ENCODE measurements at regions of chr12 and their contacts with region 1.

Region 1: DNA sequence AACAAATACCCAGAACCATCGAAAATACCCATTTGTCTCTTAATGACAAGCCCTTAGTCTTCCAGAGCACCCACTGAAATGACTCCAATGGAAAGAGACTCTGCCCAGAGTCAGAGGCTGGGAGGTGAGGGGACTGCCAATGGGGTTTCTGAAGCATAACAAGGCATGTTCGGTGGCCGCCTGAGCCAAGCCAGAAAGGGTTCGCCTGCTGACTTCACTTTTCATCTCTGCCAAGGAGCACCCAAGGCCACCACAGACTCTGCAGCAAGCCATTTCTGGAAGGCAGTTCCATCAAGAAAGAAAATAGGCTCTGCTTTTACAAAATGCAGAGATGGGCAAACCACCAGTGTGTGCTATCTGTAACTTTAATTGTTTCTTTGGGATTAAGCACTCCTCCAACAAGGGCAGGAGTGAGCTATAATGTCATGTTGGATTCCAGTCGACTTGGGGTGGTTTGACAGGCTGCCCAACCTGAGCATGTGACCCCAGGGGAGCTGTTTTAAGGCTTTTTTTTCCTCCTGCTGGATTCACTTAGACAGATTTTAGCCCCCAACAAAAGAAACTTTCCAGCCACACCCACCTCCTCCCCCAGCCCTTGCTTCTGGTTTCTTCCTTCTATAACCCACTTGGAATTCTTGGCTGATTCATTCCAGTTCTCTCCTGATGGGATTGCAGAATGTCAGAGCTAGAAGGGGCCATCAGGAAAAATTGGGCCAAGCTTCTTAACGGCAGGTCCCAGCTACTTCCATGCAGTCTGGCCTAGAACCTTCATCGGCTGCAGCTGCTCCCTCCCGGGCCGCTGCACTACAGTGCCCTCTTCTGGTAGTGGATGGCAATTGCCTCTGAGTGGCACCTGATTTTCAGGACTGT is 24.1 kb downstream of the CKAP4 start:
- DNase-seq: peak in 1 of 2 donors; percentile 65
- ATAC-seq: peak; percentile 73

Region 2: DNA sequence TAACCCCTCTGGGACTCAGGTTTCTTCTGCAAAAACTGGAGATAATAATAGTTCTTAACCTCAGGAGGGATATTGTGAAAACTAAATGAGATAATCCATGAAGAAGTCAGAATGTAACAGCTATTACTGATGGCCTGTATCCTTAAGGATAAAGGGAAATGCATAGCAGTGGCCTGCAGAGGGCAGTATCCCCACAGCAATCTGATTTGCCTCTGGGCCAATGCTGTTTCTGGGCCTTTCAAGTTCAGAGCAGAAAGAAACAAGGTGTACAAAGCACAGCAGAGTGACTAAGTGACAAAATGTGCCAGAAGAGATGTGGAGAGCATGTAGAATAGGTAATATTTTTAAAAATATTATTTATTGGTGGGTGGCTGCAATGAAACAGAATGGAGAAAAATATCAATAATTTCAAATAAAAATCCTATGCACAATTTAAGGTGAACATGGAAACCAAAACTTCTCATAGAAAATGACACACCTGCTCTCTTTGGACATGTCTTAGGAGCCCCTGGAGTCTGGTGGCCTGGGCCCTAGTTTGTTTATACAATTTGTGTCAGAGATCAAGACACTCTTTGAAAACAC is 803.0 kb before region 1 on chr12:
- intact Hi-C with region 1: loop called in 1 of 2 experiments (anchors 5 kb)
- DNase-seq: peak; percentile 45 to 67
- ATAC-seq: peak; percentile 91

Region 3: DNA sequence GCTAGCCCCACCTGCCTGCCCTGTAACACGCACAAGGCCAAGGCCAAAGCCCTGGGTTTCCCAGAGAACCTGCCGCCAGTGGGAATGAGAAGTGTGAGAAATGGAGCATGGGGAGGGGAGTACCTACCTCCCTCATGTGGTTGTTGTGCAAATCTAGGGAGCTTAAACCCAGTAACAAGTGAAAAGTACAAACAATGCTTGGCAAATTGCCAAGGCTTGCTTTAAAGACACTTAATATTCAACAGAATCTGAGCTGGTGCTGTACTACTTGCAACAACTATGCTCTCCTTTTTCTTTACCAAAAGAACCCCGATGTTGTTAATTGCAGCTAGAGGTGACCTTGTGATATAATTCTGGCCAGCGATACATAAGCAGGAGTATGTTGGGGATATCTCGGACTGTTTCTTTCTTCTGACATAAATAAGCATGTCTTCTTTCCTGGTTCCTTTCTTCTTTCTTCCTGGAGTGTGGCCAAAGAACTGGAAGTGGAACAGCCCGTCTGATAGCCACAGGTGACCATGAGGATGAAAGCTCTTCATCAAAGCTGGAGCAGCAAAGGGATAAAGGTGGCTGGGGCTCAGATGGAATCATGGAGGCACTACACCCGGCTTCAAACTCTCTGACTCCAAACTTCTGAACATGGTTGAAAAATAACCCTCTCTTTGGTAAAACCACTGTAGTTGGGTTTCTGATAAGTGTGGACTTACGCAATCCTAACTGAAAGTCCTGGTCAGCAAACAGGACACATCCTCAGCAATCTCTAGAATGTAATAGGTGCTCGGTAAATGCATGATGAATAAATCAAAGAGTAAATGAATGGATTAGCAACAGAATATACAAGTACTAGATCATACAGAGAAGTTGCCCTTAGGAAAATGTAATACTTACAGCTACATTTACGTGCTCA is 292.9 kb before region 1 on chr12:
- intact Hi-C with region 1: no loop called
- DNase-seq: no peak
- ATAC-seq: no peak

Region 4: GRCh38 chr12:106123551-106124081 is 100.1 kb before region 1 on chr12:
- intact Hi-C with region 1: no loop called
- DNase-seq: peak in 1 of 2 donors; percentile 44
- ATAC-seq: peak; percentile 69

Region 5: DNA sequence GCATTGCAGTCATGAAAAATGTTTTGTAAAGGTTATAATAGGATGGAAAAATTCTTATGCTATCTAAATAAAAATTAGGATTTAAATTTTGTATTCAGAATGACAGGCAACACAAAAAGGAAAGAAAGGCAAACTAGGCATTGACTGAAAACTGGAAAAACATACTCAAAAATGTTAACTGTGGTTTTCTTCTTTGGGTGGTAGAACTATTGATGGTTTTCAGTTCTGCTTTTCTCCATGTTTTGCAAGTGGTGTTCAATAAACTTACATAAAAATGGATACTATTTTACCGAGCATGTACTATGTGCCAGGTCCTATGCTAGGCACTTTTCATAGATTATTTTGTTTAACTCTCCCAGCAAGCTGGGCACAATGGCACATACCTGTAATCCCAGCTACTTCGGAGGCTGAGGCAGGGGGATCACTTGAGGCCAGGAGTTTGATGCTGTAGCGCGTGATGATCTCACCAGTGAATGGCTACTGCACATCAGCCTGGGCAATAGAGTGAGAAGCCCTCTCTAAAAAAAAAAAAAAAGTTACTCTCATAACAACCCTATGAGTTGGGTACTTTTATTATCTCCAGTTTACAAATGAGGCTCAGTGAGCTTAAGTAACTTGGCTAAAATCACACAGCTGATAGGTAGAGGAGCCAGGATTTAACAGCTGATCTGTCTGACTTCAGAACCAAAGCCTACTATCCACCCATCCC is 52.5 kb after region 1 on chr12:
- intact Hi-C with region 1: loop called (anchors 2 to 10 kb)
- DNase-seq: no peak
- ATAC-seq: no peak

Region 6: DNA sequence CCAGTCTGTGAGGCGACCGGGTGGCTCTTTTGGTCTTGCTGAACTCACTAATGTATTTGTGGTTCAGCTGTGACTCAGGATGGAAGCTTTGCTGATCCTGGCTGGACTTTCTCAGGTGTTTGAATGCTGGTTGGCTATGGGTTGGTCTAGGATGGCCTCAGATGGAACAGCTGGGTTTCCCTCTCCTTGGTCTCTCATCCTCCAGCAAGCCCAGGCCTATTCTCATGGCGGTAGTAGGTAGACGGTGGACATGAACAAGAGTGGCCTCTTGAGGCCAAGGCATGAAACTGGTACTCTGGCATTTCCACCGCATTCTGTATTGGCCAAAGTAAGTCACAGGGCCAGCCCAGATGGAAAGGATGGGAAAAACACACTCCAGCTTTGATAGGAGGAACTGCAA is 122.0 kb after region 1 on chr12:
- intact Hi-C with region 1: loop called in 1 of 2 experiments (anchors 10 kb)
- DNase-seq: peak; percentile 14 to 34
- ATAC-seq: peak; percentile 84

Measured in left colon (tissue), 2 donors.